Naive thymus-derived CD4-positive, alpha-beta T cell (primary cell): ENCODE measurements at regions of chr17 and their contacts with region 1.

Region 1: DNA sequence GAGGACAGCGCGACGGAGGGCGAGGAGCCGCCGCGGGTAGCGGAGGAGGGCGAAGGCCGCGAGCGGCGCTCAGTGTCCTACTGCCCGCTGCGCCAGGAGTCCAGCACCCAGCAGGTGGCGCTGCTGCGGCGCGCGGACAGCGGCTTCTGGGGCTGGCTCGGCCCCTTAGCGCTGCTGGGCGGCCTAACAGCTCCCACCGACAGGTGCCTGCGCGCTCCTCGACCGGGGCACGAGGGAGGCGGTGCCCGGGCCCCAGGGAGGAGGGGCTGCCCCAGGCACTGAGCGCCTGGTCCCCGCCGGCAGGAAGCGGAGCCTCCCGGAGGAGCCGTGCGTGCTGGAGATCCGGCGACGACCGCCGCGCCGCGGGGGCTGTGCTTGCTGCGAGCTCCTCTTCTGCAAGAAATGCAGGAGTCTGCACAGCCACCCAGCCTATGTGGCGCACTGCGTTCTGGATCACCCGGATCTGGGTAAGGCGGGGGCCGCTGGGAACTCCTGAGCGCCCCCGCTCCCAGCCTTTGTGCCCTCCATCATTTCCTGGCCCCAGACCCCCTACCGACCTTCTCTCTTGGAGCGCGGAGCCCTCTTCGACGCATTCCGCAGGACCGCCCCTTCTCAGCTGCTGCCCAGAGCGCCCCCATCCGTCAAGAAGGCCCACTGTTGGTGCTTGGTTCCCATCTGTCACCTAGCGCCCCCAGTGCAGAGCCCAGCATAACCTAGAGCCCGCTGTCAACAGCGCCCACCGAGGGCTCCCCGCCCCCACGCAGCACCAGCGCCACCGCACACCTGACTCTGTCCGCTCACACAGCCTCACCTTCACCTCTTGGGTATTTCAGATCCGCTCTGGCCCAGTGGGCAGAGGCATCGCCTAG is 3.7 kb downstream of the C17orf50 start:
- DNase-seq: peak; percentile 70 to 92 (median 81)
- ATAC-seq: peak; percentile 90
- H3K4me3 ChIP-seq: peak overlapping the region; percentile 92
- H3K4me3 Mint-ChIP-seq: peak overlapping the region; percentile 90 to 99 (median 93)
- H3K27ac ChIP-seq: peak overlapping the region; percentile 50
- H3K27ac Mint-ChIP-seq: peak overlapping the region; percentile 41 to 88 (median 79)
- H3K4me1 ChIP-seq: peaks cover 0 to 9% of the 10 kb centered on the region in 2 donors
- H3K4me1 Mint-ChIP-seq: peaks cover 0 to 10% (median 8%) of the 10 kb centered on the region in 7 donors
- H3K27me3 ChIP-seq: no peaks in the 10 kb centered on the region
- H3K27me3 Mint-ChIP-seq: peaks cover 0 to 21% (median 0%) of the 10 kb centered on the region in 5 donors

Region 2: DNA sequence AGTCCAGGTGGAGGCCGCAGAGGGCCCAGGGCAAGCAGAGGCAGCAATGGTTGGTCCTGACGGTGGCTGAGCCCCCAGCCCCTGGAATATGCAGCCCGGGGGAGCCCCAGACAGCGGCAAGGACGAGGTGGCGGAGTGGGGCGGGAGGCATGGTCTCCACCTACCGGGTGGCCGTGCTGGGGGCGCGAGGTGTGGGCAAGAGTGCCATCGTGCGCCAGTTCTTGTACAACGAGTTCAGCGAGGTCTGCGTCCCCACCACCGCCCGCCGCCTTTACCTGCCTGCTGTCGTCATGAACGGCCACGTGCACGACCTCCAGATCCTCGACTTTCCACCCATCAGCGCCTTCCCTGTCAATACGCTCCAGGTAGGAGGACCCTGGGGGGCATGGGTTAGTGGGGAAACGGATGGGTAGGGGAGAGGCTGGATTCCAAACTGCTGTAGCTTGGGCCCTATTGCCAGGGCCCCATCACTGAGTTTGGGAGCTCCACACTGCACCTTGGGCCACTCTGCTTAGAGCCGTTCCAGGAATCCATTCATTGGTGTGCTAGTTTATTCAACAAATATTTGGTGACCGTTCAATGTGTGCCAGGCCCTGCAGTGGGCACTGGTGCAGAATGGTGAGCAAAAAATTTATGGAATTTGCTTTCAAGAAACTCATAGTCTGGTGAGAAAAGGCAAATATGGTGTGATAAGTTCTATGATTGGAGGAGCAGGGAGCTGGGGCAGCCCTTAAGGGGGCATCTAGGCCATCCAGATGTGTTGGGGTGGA is 29.1 kb before region 1 on chr17:
- CTCF ChIA-PET with region 1: no interaction called
- POLR2A ChIA-PET with region 1: no interaction called
- intact Hi-C with region 1: no loop called
- DNase-seq: no peak
- ATAC-seq: no peak
- H3K4me3 ChIP-seq: no peak overlapping the region
- H3K4me3 Mint-ChIP-seq: no peak overlapping the region
- H3K27ac ChIP-seq: no peak overlapping the region
- H3K27ac Mint-ChIP-seq: peak overlapping the region in 2 of 9 donors; percentile 45 to 72
- H3K4me1 ChIP-seq: peaks cover 8 to 12% of the 10 kb centered on the region in 2 donors
- H3K4me1 Mint-ChIP-seq: peaks cover 10 to 25% (median 16%) of the 10 kb centered on the region in 7 donors
- H3K27me3 ChIP-seq: no peaks in the 10 kb centered on the region
- H3K27me3 Mint-ChIP-seq: peaks cover 3 to 41% (median 5%) of the 10 kb centered on the region in 5 donors

Region 3: DNA sequence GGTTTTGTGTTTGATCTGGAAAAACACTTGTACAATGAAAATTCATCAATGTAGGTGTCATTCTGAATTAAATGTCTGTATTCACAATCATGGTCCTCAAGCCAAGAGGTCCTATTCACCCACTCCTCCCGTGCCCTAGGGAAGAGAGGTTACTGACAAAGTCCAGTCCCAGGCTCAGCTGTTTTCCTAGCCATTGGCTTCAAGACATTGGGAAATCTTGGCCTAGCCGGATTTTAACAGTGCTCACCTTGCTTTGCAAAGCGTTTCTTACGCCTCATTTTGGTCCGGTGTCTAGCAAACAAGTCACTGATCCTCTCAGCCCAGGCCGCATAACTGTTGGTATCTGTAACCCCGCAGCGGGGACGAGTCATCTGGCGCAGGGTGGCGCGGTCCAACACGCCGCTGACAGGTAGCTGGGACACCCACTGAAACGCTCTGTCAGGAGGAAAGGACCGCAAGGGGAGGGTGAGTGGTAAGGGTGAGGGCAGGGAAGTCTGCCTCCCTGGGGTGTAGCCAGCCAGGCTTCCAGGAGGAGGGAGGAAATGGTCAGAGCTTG is 14.4 kb after region 1 on chr17:
- CTCF ChIA-PET with region 1: interaction called, 13 read pairs
- POLR2A ChIA-PET with region 1: no interaction called
- intact Hi-C with region 1: no loop called
- DNase-seq: no peak
- ATAC-seq: no peak
- H3K4me3 ChIP-seq: no peak overlapping the region
- H3K4me3 Mint-ChIP-seq: no peak overlapping the region
- H3K27ac ChIP-seq: no peak overlapping the region
- H3K27ac Mint-ChIP-seq: no peak overlapping the region
- H3K4me1 ChIP-seq: no peaks in the 10 kb centered on the region
- H3K4me1 Mint-ChIP-seq: peaks cover 0 to 3% (median 0%) of the 10 kb centered on the region in 7 donors
- H3K27me3 ChIP-seq: no peaks in the 10 kb centered on the region
- H3K27me3 Mint-ChIP-seq: peaks cover 0 to 27% (median 5%) of the 10 kb centered on the region in 5 donors

Region 4: GRCh38 chr17:35788504-35789368 is 24.4 kb after region 1 on chr17:
- CTCF ChIA-PET with region 1: interaction called, 23 read pairs
- POLR2A ChIA-PET with region 1: interaction called, 4 read pairs
- intact Hi-C with region 1: no loop called
- DNase-seq: no peak
- ATAC-seq: no peak
- H3K4me3 ChIP-seq: no peak overlapping the region
- H3K4me3 Mint-ChIP-seq: peak overlapping the region in 9 of 10 donors; percentile 30 to 78 (median 58)
- H3K27ac ChIP-seq: peak overlapping the region; percentile 37
- H3K27ac Mint-ChIP-seq: peak overlapping the region in 8 of 9 donors; percentile 3 to 84 (median 66)
- H3K4me1 ChIP-seq: peaks cover 0 to 29% of the 10 kb centered on the region in 2 donors
- H3K4me1 Mint-ChIP-seq: peaks cover 2 to 69% (median 46%) of the 10 kb centered on the region in 7 donors
- H3K27me3 ChIP-seq: no peaks in the 10 kb centered on the region
- H3K27me3 Mint-ChIP-seq: peaks cover 0 to 62% (median 7%) of the 10 kb centered on the region in 5 donors

Region 5: GRCh38 chr17:35794988-35795824 is 30.8 kb after region 1 on chr17 and contains the start of gene MMP28:
- CTCF ChIA-PET with region 1: interaction called, 20 read pairs
- POLR2A ChIA-PET with region 1: interaction called, 12 read pairs
- intact Hi-C with region 1: no loop called
- DNase-seq: peak; percentile 20 to 68 (median 39)
- ATAC-seq: peak; percentile 81
- H3K4me3 ChIP-seq: peak within 1 kb of the TSS; percentile 33
- H3K4me3 Mint-ChIP-seq: peak within 1 kb of the TSS; percentile 79 to 90 (median 85)
- H3K27ac ChIP-seq: peak within 1 kb of the TSS; percentile 4
- H3K27ac Mint-ChIP-seq: peak within 1 kb of the TSS in 8 of 9 donors; percentile 6 to 84 (median 49)
- H3K4me1 ChIP-seq: peaks cover 4 to 21% of the 10 kb centered on the region in 2 donors
- H3K4me1 Mint-ChIP-seq: peaks cover 7 to 66% (median 45%) of the 10 kb centered on the region in 7 donors
- H3K27me3 ChIP-seq: no peaks in the 10 kb centered on the region
- H3K27me3 Mint-ChIP-seq: peaks cover 0 to 87% (median 22%) of the 10 kb centered on the region in 5 donors
- total RNA-seq, gene MMP28: 2.9 to 15.1 (median 14.0) TPM in 4 of 5 experiments, not detected in the other

Region 6: DNA sequence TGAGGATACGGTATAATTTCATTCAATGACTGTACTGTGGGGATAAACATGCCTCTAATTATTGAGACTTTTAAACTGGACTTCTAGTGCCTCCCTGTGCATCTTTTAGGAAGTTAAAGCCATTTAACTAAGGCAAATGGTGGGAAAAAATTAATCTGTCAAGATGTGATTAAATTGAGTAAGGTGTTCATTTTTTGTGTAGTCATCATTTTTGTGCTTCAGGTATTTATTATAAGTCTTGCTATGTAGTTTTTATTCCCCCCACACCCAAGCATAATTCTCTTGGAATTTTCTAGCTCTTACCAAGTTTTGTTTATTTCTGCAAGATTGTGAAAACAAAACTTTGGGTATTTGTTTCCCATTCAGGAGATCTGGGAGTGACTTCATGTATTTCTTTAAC is 55.1 kb after region 1 on chr17:
- CTCF ChIA-PET with region 1: interaction called, 17 read pairs
- POLR2A ChIA-PET with region 1: interaction called, 3 read pairs
- intact Hi-C with region 1: no loop called
- DNase-seq: no peak
- ATAC-seq: no peak
- H3K4me3 ChIP-seq: no peak overlapping the region
- H3K4me3 Mint-ChIP-seq: no peak overlapping the region
- H3K27ac ChIP-seq: no peak overlapping the region
- H3K27ac Mint-ChIP-seq: peak overlapping the region in 3 of 9 donors; percentile 17 to 62 (median 25)
- H3K4me1 ChIP-seq: peaks cover 3 to 16% of the 10 kb centered on the region in 2 donors
- H3K4me1 Mint-ChIP-seq: peaks cover 27 to 57% (median 48%) of the 10 kb centered on the region in 7 donors
- H3K27me3 ChIP-seq: no peaks in the 10 kb centered on the region
- H3K27me3 Mint-ChIP-seq: no peaks in the 10 kb centered on the region

Region 7: DNA sequence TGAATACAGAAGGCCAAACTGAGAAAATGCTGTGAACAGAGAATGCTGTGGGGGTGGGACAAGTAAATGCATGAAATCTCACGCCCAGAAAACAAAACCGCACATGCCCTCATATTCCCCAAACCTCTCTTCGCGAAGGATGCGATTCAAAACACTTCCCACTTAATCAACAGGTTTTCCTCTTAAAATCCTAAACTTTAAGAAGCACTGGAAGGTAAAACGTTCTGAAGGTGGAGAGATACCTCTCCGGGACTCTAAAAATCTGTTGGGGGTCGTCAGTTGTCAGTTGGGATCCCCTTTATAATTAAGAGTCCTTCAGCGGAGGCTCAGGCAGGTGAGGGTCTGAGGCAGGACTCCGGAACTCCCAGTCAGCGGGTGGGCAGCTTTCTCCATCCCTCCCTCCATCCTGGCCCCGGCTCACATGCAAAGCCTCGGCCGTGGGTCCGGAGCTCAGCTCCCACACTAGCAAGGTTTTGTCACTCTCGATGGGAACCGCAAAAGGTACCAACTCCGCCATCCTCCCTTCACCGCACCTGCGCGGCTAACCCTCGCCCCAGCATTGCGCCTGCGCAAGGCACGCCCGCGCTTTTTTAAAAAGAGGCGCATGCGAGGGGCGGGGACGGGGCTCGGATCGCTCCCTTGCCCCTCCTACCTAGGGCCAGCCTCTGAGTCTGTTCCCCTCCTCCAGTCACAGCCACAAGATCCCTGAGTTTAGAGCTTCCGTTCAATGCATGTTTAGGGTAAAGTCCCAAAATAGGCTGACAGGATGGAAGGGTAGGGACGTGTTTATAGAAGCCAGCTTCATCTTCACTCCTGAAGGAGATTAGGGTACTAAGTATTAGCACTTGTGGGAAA is 166.1 kb after region 1 on chr17 and contains the start of gene RDM1:
- CTCF ChIA-PET with region 1: no interaction called
- POLR2A ChIA-PET with region 1: no interaction called
- intact Hi-C with region 1: loop called in 1 of 2 experiments (anchors 5 kb)
- DNase-seq: peak; percentile 59 to 93 (median 70)
- ATAC-seq: peak; percentile 89
- H3K4me3 ChIP-seq: peak within 1 kb of the TSS; percentile 61
- H3K4me3 Mint-ChIP-seq: peak within 1 kb of the TSS; percentile 82 to 91 (median 85)
- H3K27ac ChIP-seq: no peak within 1 kb of the TSS
- H3K27ac Mint-ChIP-seq: peak within 1 kb of the TSS in 5 of 9 donors; percentile 55 to 92 (median 72)
- H3K4me1 ChIP-seq: no peaks in the 10 kb centered on the region
- H3K4me1 Mint-ChIP-seq: peaks cover 6 to 29% (median 13%) of the 10 kb centered on the region in 7 donors
- H3K27me3 ChIP-seq: no peaks in the 10 kb centered on the region
- H3K27me3 Mint-ChIP-seq: peaks cover 0 to 8% (median 0%) of the 10 kb centered on the region in 5 donors
- total RNA-seq, gene RDM1: 6.9 TPM in 1 of 5 experiments, not detected in the others